ENCODE measurements at regions of chr10 and their contacts with region 1.

Region 1: DNA sequence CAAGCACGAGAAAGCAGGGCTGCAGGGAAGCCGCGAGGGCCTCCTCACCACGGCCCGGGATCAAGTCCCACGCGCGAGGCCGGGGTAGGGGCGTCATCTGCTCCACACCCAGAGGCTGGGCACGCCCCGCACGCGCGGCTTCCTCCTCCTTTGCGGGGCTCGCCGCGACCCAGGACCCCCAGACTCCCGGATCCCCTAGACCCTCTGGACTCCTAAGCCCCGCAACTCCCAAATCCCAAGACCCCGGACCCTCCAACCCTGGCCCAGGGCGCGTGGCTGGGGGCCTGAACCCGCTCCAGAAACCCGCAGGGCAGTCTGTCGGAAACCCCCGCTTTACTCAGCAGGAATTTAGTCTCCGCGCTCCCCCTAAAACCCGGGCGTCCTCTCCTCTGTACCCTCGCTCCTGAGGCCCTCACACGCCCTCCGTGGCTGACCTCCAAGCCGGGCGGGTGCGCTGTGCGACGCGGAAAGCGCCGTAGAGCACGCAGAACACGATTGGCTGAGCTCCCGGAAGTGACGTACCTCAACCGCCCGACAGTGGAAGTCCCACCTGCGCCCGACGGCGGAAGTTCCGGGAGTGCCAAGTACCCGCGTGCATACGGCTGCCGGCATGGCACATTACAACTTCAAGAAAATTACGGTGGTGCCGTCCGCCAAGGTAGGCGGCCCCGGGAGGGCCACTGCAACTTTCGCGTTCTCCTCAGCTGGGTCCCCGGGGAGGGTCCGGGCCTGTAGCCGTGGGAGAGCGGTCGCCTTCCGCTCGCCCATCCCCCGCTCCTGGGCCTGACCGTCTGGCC is at the start of gene GTPBP4:
- DNase-seq: peak; percentile 91 to 99 (median 97)
- ATAC-seq: peak; percentile 95
- H3K4me3 ChIP-seq: peak within 1 kb of the TSS; percentile 89 to 99
- H3K4me3 Mint-ChIP-seq: peak within 1 kb of the TSS; percentile 97
- H3K27ac ChIP-seq: peak within 1 kb of the TSS; percentile 85 to 90
- H3K27ac Mint-ChIP-seq: peak within 1 kb of the TSS; percentile 98
- H3K4me1 ChIP-seq: peaks cover 27% of the 10 kb centered on the region
- H3K4me1 Mint-ChIP-seq: peaks cover 37% of the 10 kb centered on the region
- H3K27me3 ChIP-seq: no peaks in the 10 kb centered on the region
- H3K27me3 Mint-ChIP-seq: no peaks in the 10 kb centered on the region
- CTCF ChIP-seq: no peak
- total RNA-seq, gene GTPBP4: 78.2 to 84.2 TPM

Region 2: GRCh38 chr10:135132-135600 is 852.9 kb before region 1 on chr10 and contains the start of gene ZMYND11:
- CTCF ChIA-PET with region 1: no interaction called
- POLR2A ChIA-PET with region 1: no interaction called
- intact Hi-C with region 1: loop called in 1 of 2 experiments (anchors 5 kb)
- DNase-seq: peak; percentile 46 to 84 (median 69)
- ATAC-seq: peak; percentile 49
- H3K4me3 ChIP-seq: peak within 1 kb of the TSS; percentile 56 to 80
- H3K4me3 Mint-ChIP-seq: peak within 1 kb of the TSS; percentile 92
- H3K27ac ChIP-seq: peak within 1 kb of the TSS; percentile 72 to 83
- H3K27ac Mint-ChIP-seq: peak within 1 kb of the TSS; percentile 94
- H3K4me1 ChIP-seq: peaks cover 28% of the 10 kb centered on the region
- H3K4me1 Mint-ChIP-seq: peaks cover 51% of the 10 kb centered on the region
- H3K27me3 ChIP-seq: no peaks in the 10 kb centered on the region
- H3K27me3 Mint-ChIP-seq: no peaks in the 10 kb centered on the region
- CTCF ChIP-seq: no peak
- total RNA-seq, gene ZMYND11: 19.8 to 19.9 TPM

Region 3: GRCh38 chr10:878895-879294 is 109.2 kb before region 1 on chr10:
- CTCF ChIA-PET with region 1: no interaction called
- POLR2A ChIA-PET with region 1: no interaction called
- intact Hi-C with region 1: no loop called
- DNase-seq: no peak
- ATAC-seq: no peak
- H3K4me3 ChIP-seq: no peak overlapping the region
- H3K4me3 Mint-ChIP-seq: no peak overlapping the region
- H3K27ac ChIP-seq: no peak overlapping the region
- H3K27ac Mint-ChIP-seq: peak overlapping the region; percentile 62
- H3K4me1 ChIP-seq: no peaks in the 10 kb centered on the region
- H3K4me1 Mint-ChIP-seq: peaks cover 15% of the 10 kb centered on the region
- H3K27me3 ChIP-seq: no peaks in the 10 kb centered on the region
- H3K27me3 Mint-ChIP-seq: no peaks in the 10 kb centered on the region
- CTCF ChIP-seq: no peak

Region 4: GRCh38 chr10:931416-932318 is 56.4 kb before region 1 on chr10 and contains the start of gene LARP4B:
- CTCF ChIA-PET with region 1: no interaction called
- POLR2A ChIA-PET with region 1: interaction called, 3 read pairs
- intact Hi-C with region 1: loop called (anchors 1 kb)
- DNase-seq: peak; percentile 93 to 99 (median 96)
- ATAC-seq: peak; percentile 98
- H3K4me3 ChIP-seq: peak within 1 kb of the TSS; percentile 42 to 64
- H3K4me3 Mint-ChIP-seq: peak within 1 kb of the TSS; percentile 96
- H3K27ac ChIP-seq: peak within 1 kb of the TSS; percentile 65 to 95
- H3K27ac Mint-ChIP-seq: peak within 1 kb of the TSS; percentile 95
- H3K4me1 ChIP-seq: peaks cover 30% of the 10 kb centered on the region
- H3K4me1 Mint-ChIP-seq: peaks cover 41% of the 10 kb centered on the region
- H3K27me3 ChIP-seq: no peaks in the 10 kb centered on the region
- H3K27me3 Mint-ChIP-seq: no peaks in the 10 kb centered on the region
- CTCF ChIP-seq: no peak
- total RNA-seq, gene LARP4B: 32.5 to 32.7 TPM

Region 5: GRCh38 chr10:1048732-1049424 is 60.8 kb after region 1 on chr10 and contains the start of gene IDI1:
- CTCF ChIA-PET with region 1: interaction called, 3 read pairs
- POLR2A ChIA-PET with region 1: interaction called, 6 read pairs
- intact Hi-C with region 1: loop called (anchors 1 to 2 kb)
- DNase-seq: peak; percentile 91 to 99 (median 95)
- ATAC-seq: peak; percentile 74
- H3K4me3 ChIP-seq: peak within 1 kb of the TSS; percentile 81 to 91
- H3K4me3 Mint-ChIP-seq: peak within 1 kb of the TSS; percentile 94
- H3K27ac ChIP-seq: peak within 1 kb of the TSS; percentile 97 to 100
- H3K27ac Mint-ChIP-seq: peak within 1 kb of the TSS; percentile 99
- H3K4me1 ChIP-seq: peaks cover 57% of the 10 kb centered on the region
- H3K4me1 Mint-ChIP-seq: peaks cover 68% of the 10 kb centered on the region
- H3K27me3 ChIP-seq: no peaks in the 10 kb centered on the region
- H3K27me3 Mint-ChIP-seq: no peaks in the 10 kb centered on the region
- CTCF ChIP-seq: no peak
- total RNA-seq, gene IDI1: 307 to 317 TPM

Region 6: GRCh38 chr10:1056326-1057105 is 68.4 kb after region 1 on chr10 and contains the start of gene WDR37:
- CTCF ChIA-PET with region 1: interaction called, 3 read pairs
- POLR2A ChIA-PET with region 1: interaction called, 3 read pairs
- intact Hi-C with region 1: loop called (anchors 1 kb)
- DNase-seq: peak; percentile 75 to 93 (median 89)
- ATAC-seq: peak; percentile 87
- H3K4me3 ChIP-seq: peak within 1 kb of the TSS; percentile 76 to 87
- H3K4me3 Mint-ChIP-seq: peak within 1 kb of the TSS; percentile 95
- H3K27ac ChIP-seq: peak within 1 kb of the TSS; percentile 92 to 95
- H3K27ac Mint-ChIP-seq: peak within 1 kb of the TSS; percentile 97
- H3K4me1 ChIP-seq: peaks cover 58% of the 10 kb centered on the region
- H3K4me1 Mint-ChIP-seq: peaks cover 83% of the 10 kb centered on the region
- H3K27me3 ChIP-seq: no peaks in the 10 kb centered on the region
- H3K27me3 Mint-ChIP-seq: no peaks in the 10 kb centered on the region
- CTCF ChIP-seq: no peak
- total RNA-seq, gene WDR37: 22.6 to 23.7 TPM

Measured in CD8-positive, alpha-beta T cell (primary cell).